ENCODE measurements at regions of chr16 and their contacts with region 1.

Region 1: GRCh38 chr16:86951831-86952598 is 365.2 kb downstream of the C16orf95 start:
- DNase-seq: peak; percentile 93
- H3K4me3 ChIP-seq: no peak overlapping the region
- CTCF ChIP-seq: no peak

Region 2: DNA sequence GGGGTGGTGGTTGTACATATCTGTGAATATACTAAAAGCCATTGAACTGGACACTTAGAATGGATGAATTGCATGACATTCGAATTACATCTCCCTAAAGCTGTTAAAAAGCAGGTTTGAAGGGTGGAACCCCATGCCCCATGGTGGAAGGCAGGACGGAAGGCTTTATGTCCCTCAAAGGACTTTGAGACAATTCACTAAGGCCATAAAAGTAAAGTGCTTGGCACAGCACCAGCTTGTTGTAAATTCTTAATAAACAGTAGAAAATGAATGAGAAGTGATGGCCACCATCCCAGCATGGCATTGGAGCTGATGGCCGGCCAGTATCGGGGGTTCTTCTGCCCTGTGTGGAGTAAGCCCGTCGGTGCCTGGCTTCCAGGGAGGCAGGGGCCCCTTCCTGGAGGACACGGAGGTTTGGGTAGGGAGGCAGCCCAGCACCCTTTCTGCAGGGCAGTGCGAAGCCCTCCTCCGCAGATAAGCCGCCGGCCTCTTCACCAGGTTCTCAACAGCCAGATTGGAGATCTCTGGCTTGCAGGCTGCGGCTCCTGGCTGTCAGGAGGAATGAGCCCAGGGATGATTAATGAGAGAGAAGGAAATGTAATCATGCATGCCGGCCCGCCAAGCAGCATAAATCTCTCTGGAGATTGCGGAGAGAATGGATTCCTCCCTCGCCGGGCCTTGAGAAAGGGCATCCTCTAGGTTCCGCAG is 26.8 kb before region 1 on chr16:
- CTCF ChIA-PET with region 1: no interaction called
- POLR2A ChIA-PET with region 1: interaction called, 17 read pairs
- DNase-seq: peak; percentile 40
- H3K4me3 ChIP-seq: no peak overlapping the region
- CTCF ChIP-seq: no peak